Dendritic cell treated with granulocyte-macrophage colony-stimulating factor and Interleukin-4, amounts not matched to agents 40 ng/mL and 50 ng/mL, for 4 days (primary cell): ENCODE measurements at regions of chr11 and their contacts with region 1.

Region 1: DNA sequence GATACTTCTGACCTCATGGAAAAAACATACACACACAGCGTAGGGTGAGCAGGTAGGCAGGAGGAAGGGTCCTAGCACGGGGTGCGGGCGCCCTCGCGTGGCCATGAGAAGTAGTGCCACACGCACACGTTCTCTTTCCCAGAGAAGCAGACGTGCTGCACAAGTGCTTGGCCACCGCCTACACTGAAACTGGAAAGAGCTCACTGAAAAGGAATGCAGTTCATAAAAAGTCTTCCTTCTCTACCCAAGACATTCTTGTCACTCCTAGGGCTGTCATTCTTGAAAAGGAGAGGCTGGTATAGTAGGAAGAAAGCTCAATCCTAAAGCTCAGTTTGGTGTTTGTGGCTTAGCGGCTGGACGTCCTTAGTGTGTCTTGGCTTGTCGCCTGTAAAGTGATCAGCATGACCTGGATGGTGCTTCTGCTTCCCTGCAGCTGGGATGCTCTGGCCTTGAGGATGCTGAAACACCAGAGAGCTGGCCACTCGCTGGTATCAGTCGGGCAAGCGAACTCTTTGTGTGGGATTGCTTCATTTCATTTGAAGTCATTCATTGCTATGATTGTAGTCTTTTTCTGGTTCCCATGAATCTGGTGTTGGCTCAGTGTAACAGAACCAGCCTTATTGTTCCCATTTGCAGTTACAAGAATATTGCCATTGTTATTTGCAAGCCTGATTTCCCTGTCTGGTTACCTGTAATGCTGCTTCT is 303.8 kb downstream of the NTM start:
- H3K4me3 Mint-ChIP-seq: no peak overlapping the region
- H3K27ac Mint-ChIP-seq: no peak overlapping the region
- H3K4me1 Mint-ChIP-seq: peaks cover 3% of the 10 kb centered on the region
- H3K27me3 Mint-ChIP-seq: peaks cover 3% of the 10 kb centered on the region

Region 2: DNA sequence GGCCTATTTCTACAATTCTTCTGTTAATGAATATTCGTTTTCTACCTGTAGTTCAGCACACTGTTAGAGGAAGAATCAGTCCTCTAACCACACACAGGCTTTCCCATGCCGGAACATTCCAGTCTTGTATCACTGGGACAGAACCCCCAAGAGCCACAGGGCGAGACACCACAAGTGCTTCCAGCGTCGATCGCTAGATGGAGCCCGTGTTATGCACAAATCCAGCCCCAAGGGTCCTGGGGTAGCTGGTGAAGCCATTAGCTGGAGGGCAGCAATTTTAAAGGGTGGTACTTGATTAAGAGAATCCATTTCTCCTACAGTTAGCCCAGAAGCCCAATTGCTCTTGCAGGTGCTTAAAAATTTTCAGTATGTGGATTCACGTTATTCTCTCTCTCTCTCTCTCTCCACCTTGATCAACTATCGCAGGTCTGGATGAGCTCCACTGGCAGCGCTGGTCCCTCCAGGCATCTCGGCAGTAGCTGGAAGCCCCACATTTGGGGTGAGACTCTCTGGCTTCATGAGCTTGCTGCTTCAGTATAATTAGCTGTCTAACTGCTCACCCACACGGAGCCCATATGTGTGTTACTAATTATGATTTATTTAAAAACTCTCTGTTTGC is 609.7 kb before region 1 on chr11:
- intact Hi-C with region 1: loop called (anchors 1 kb)
- H3K4me3 Mint-ChIP-seq: no peak overlapping the region
- H3K27ac Mint-ChIP-seq: no peak overlapping the region
- H3K4me1 Mint-ChIP-seq: no peaks in the 10 kb centered on the region
- H3K27me3 Mint-ChIP-seq: no peaks in the 10 kb centered on the region

Region 3: GRCh38 chr11:131408025-131408640 is 266.1 kb before region 1 on chr11:
- intact Hi-C with region 1: loop called (anchors 5 kb)
- H3K4me3 Mint-ChIP-seq: no peak overlapping the region
- H3K27ac Mint-ChIP-seq: no peak overlapping the region
- H3K4me1 Mint-ChIP-seq: no peaks in the 10 kb centered on the region
- H3K27me3 Mint-ChIP-seq: peaks cover 1% of the 10 kb centered on the region